ENCODE measurements at regions of chr9 and their contacts with region 1.

Region 1: GRCh38 chr9:121281561-121282310 is 13.8 kb downstream of the GSN start:
- DNase-seq: no peak
- H3K4me3 ChIP-seq: no peak overlapping the region
- H3K4me1 ChIP-seq: peaks cover 19% of the 10 kb centered on the region
- H3K27me3 ChIP-seq: no peaks in the 10 kb centered on the region

Region 2: GRCh38 chr9:121213136-121213806 is 68.5 kb before region 1 on chr9:
- in situ Hi-C with region 1: loop called (anchors 5 kb)
- DNase-seq: peak; percentile 86 to 93
- H3K4me3 ChIP-seq: no peak overlapping the region
- H3K4me1 ChIP-seq: peaks cover 3% of the 10 kb centered on the region; the same call in 1 of the 2 replicates
- H3K27me3 ChIP-seq: no peaks in the 10 kb centered on the region